ENCODE measurements at regions of chr11 and their contacts with region 1.

Region 1: GRCh38 chr11:2400069-2400760 is at the start of gene TSSC4:
- DNase-seq: peak; percentile 99
- ATAC-seq: peak; percentile 86
- H3K4me3 ChIP-seq: peak within 1 kb of the TSS; percentile 98
- H3K27ac ChIP-seq: peak within 1 kb of the TSS; percentile 85
- H3K4me1 ChIP-seq: peaks cover 11% of the 10 kb centered on the region
- H3K27me3 ChIP-seq: no peaks in the 10 kb centered on the region
- CTCF ChIP-seq: peak; percentile 84
- total RNA-seq, gene TSSC4: 88.3 and 98.5 TPM in 2 replicates

Region 2: DNA sequence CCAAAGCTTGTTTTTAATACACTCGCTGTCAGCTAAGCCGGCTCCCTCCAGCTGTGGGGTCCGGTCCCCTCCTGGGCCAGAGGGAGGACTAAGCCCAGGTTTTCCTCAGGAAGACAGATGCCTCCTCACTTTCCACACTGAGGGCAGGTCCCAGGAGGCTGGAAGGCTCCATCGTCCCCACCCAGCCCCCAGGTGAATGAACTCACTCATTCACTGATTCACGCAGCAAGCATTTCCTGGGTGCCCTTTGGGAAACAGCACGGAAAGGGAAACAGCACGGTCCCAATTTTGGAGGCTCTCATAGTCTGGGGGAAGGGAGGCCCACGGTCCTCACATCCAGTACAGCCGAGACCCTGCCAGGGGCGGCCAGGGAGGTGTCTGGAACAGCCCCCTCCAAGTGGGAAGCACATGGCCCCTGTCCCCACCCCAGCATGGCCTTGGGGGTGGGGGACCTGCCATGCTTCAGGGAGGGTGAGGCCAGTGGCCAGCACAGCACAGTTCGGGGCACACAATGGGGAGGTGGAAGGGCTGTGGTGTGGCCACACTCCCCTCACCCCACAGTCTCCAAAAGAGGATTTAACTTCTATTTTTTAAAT is 219.3 kb before region 1 on chr11:
- CTCF ChIA-PET with region 1: no interaction called
- POLR2A ChIA-PET with region 1: no interaction called
- intact Hi-C with region 1: loop called (anchors 5 kb)
- DNase-seq: peak; percentile 94
- ATAC-seq: peak; percentile 56
- H3K4me3 ChIP-seq: no peak overlapping the region
- H3K27ac ChIP-seq: peak overlapping the region; percentile 91
- H3K4me1 ChIP-seq: peaks cover 60% of the 10 kb centered on the region
- H3K27me3 ChIP-seq: no peaks in the 10 kb centered on the region
- CTCF ChIP-seq: no peak

Region 3: GRCh38 chr11:2305140-2305840 is 94.9 kb before region 1 on chr11:
- CTCF ChIA-PET with region 1: no interaction called
- POLR2A ChIA-PET with region 1: interaction called, 10 read pairs
- intact Hi-C with region 1: no loop called
- DNase-seq: peak; percentile 77
- ATAC-seq: peak; percentile 92
- H3K4me3 ChIP-seq: no peak overlapping the region
- H3K27ac ChIP-seq: no peak overlapping the region
- H3K4me1 ChIP-seq: no peaks in the 10 kb centered on the region
- H3K27me3 ChIP-seq: no peaks in the 10 kb centered on the region
- CTCF ChIP-seq: peak; percentile 85

Region 4: GRCh38 chr11:2377511-2378443 is 22.4 kb before region 1 on chr11:
- CTCF ChIA-PET with region 1: no interaction called
- POLR2A ChIA-PET with region 1: interaction called, 5 read pairs
- intact Hi-C with region 1: loop called (anchors 1 kb)
- DNase-seq: peak; percentile 46
- ATAC-seq: peak; percentile 56
- H3K4me3 ChIP-seq: peak overlapping the region; percentile 99
- H3K27ac ChIP-seq: no peak overlapping the region
- H3K4me1 ChIP-seq: no peaks in the 10 kb centered on the region
- H3K27me3 ChIP-seq: no peaks in the 10 kb centered on the region
- CTCF ChIP-seq: no peak

Region 5: GRCh38 chr11:2420502-2421225 is 20.4 kb after region 1 on chr11:
- CTCF ChIA-PET with region 1: interaction called, 21 read pairs
- POLR2A ChIA-PET with region 1: interaction called, 4 read pairs
- intact Hi-C with region 1: loop called (anchors 1 kb)
- DNase-seq: peak; percentile 77
- ATAC-seq: peak; percentile 95
- H3K4me3 ChIP-seq: no peak overlapping the region
- H3K27ac ChIP-seq: no peak overlapping the region
- H3K4me1 ChIP-seq: 0 out of 2 replicates have a peak, but pooled peaks cover 3% of the 10 kb centered on the region
- H3K27me3 ChIP-seq: no peaks in the 10 kb centered on the region
- CTCF ChIP-seq: peak; percentile 88

Region 6: DNA sequence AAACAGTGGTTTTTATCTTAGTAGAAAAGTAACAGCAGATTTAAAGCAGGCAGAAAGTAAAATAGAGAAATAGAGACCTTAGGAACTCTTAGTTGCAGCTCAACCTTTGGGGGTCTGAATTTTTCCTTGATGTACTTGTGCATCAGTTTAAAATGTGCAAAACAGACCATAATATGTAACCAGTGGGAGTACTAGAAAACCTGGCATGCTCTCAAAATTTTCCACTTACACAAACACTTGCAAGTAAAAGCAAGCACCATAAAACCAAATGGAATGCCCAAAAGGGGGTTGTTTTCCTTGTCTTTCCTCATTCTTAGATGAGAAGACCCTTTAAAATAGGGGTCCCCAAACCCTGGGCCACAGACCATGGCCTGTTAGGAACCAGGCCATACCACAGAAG is 844.9 kb after region 1 on chr11:
- CTCF ChIA-PET with region 1: no interaction called
- POLR2A ChIA-PET with region 1: no interaction called
- intact Hi-C with region 1: no loop called
- DNase-seq: no peak
- ATAC-seq: no peak
- H3K4me3 ChIP-seq: no peak overlapping the region
- H3K27ac ChIP-seq: no peak overlapping the region
- H3K4me1 ChIP-seq: no peaks in the 10 kb centered on the region
- H3K27me3 ChIP-seq: peaks cover 8% of the 10 kb centered on the region; the same call in 1 of the 2 replicates
- CTCF ChIP-seq: no peak

Measured in PC-3 (cell line).